Naive thymus-derived CD4-positive, alpha-beta T cell (primary cell): ENCODE measurements at regions of chr16 and their contacts with region 1.

Region 1: GRCh38 chr16:75647492-75648264 is at the starts of genes KARS1 and TERF2IP:
- DNase-seq: peak; percentile 86 to 96 (median 96)
- ATAC-seq: peak; percentile 93
- H3K4me3 ChIP-seq: peak within 1 kb of the TSS; percentile 97
- H3K4me3 Mint-ChIP-seq: peak within 1 kb of the TSS; percentile 90 to 100 (median 99)
- H3K27ac ChIP-seq: peak within 1 kb of the TSS; percentile 97
- H3K27ac Mint-ChIP-seq: peak within 1 kb of the TSS; percentile 96 to 100 (median 99)
- H3K4me1 ChIP-seq: peaks cover 36 to 48% of the 10 kb centered on the region in 2 donors
- H3K4me1 Mint-ChIP-seq: peaks cover 35 to 76% (median 67%) of the 10 kb centered on the region in 7 donors
- H3K27me3 ChIP-seq: no peaks in the 10 kb centered on the region
- H3K27me3 Mint-ChIP-seq: no peaks in the 10 kb centered on the region
- total RNA-seq, gene KARS1: 118 to 216 (median 123) TPM
- total RNA-seq, gene TERF2IP: 70.8 to 90.4 (median 88.7) TPM

Region 2: GRCh38 chr16:73996624-73997339 is 1650.9 kb before region 1 on chr16:
- CTCF ChIA-PET with region 1: no interaction called
- POLR2A ChIA-PET with region 1: no interaction called
- intact Hi-C with region 1: no loop called
- DNase-seq: no peak
- ATAC-seq: no peak
- H3K4me3 ChIP-seq: no peak overlapping the region
- H3K4me3 Mint-ChIP-seq: no peak overlapping the region
- H3K27ac ChIP-seq: no peak overlapping the region
- H3K27ac Mint-ChIP-seq: no peak overlapping the region
- H3K4me1 ChIP-seq: no peaks in the 10 kb centered on the region
- H3K4me1 Mint-ChIP-seq: no peaks in the 10 kb centered on the region
- H3K27me3 ChIP-seq: no peaks in the 10 kb centered on the region
- H3K27me3 Mint-ChIP-seq: no peaks in the 10 kb centered on the region

Region 3: GRCh38 chr16:74372953-74373846 is 1274.5 kb before region 1 on chr16:
- CTCF ChIA-PET with region 1: no interaction called
- POLR2A ChIA-PET with region 1: no interaction called
- intact Hi-C with region 1: loop called (anchors 10 kb)
- DNase-seq: no peak
- ATAC-seq: no peak
- H3K4me3 ChIP-seq: no peak overlapping the region
- H3K4me3 Mint-ChIP-seq: no peak overlapping the region
- H3K27ac ChIP-seq: no peak overlapping the region
- H3K27ac Mint-ChIP-seq: peak overlapping the region in 2 of 9 donors; percentile 18 to 86
- H3K4me1 ChIP-seq: no peaks in the 10 kb centered on the region
- H3K4me1 Mint-ChIP-seq: peaks cover 0 to 4% (median 0%) of the 10 kb centered on the region in 7 donors
- H3K27me3 ChIP-seq: no peaks in the 10 kb centered on the region
- H3K27me3 Mint-ChIP-seq: no peaks in the 10 kb centered on the region

Region 4: GRCh38 chr16:74984535-74985296 is 663.0 kb before region 1 on chr16 and contains the start of gene WDR59:
- CTCF ChIA-PET with region 1: no interaction called
- POLR2A ChIA-PET with region 1: interaction called, 8 read pairs
- intact Hi-C with region 1: loop called (anchors 1 kb)
- DNase-seq: peak; percentile 87 to 99 (median 98)
- ATAC-seq: peak; percentile 100
- H3K4me3 ChIP-seq: peak within 1 kb of the TSS; percentile 98
- H3K4me3 Mint-ChIP-seq: peak within 1 kb of the TSS; percentile 90 to 98 (median 95)
- H3K27ac ChIP-seq: peak within 1 kb of the TSS; percentile 86
- H3K27ac Mint-ChIP-seq: peak within 1 kb of the TSS; percentile 72 to 96 (median 92)
- H3K4me1 ChIP-seq: peaks cover 5 to 6% of the 10 kb centered on the region in 2 donors
- H3K4me1 Mint-ChIP-seq: peaks cover 0 to 27% (median 23%) of the 10 kb centered on the region in 7 donors
- H3K27me3 ChIP-seq: no peaks in the 10 kb centered on the region
- H3K27me3 Mint-ChIP-seq: no peaks in the 10 kb centered on the region
- total RNA-seq, gene WDR59: 82.7 to 130 (median 84.7) TPM

Region 5: GRCh38 chr16:75080205-75081029 is 567.3 kb before region 1 on chr16:
- CTCF ChIA-PET with region 1: no interaction called
- POLR2A ChIA-PET with region 1: no interaction called
- intact Hi-C with region 1: no loop called
- DNase-seq: no peak
- ATAC-seq: no peak
- H3K4me3 ChIP-seq: no peak overlapping the region
- H3K4me3 Mint-ChIP-seq: no peak overlapping the region
- H3K27ac ChIP-seq: no peak overlapping the region
- H3K27ac Mint-ChIP-seq: peak overlapping the region in 1 of 9 donors; percentile 8
- H3K4me1 ChIP-seq: peaks cover 14 to 24% of the 10 kb centered on the region in 2 donors
- H3K4me1 Mint-ChIP-seq: peaks cover 25 to 65% (median 43%) of the 10 kb centered on the region in 7 donors
- H3K27me3 ChIP-seq: no peaks in the 10 kb centered on the region
- H3K27me3 Mint-ChIP-seq: peaks cover 0 to 4% (median 0%) of the 10 kb centered on the region in 5 donors

Region 6: DNA sequence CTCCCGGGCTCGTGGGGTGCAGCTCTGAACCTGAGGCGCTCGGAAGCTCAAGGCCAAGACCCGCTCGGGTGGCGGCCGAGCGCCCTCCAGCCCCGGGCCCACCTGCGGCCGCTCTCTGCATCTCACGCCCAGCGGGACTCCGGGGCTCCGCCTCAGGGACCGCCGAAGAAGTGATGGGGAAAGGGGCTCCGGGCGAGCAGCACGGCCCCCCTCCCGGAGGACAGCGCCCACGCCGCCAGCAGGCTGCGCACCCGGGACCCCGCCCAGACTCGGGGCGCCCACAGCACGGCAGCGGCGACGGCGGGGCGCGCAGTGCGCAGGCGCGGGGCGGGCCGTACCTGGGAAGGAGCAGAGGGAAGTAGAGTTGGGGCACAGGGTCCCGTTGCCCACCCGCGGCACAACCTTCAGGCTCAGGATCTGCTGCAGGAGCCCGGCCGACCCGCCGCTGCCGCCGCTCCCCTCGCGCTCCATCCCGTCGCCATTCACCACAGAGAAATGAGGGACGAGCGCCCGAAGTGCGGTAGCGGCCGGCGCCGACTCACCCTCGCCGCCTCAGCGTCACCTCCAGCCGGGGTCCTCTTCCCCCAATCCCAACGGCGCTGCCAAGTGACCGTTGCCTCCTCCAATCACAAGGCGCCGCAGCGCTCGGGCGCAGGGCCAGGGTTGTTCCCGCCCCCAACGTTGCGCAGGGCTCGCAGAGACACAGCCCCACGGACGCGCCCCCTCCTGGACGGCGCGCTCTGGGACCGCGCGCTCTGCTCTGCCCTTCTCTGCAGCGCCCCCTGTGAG is 183.4 kb before region 1 on chr16 and contains the start of gene TMEM170A:
- CTCF ChIA-PET with region 1: no interaction called
- POLR2A ChIA-PET with region 1: interaction called, 14 read pairs
- intact Hi-C with region 1: loop called (anchors 1 kb)
- DNase-seq: peak; percentile 96 to 99 (median 99)
- ATAC-seq: peak; percentile 95
- H3K4me3 ChIP-seq: peak within 1 kb of the TSS; percentile 93
- H3K4me3 Mint-ChIP-seq: peak within 1 kb of the TSS; percentile 86 to 98 (median 93)
- H3K27ac ChIP-seq: peak within 1 kb of the TSS; percentile 93
- H3K27ac Mint-ChIP-seq: peak within 1 kb of the TSS; percentile 75 to 97 (median 93)
- H3K4me1 ChIP-seq: peaks cover 26 to 31% of the 10 kb centered on the region in 2 donors
- H3K4me1 Mint-ChIP-seq: peaks cover 31 to 49% (median 44%) of the 10 kb centered on the region in 7 donors
- H3K27me3 ChIP-seq: no peaks in the 10 kb centered on the region
- H3K27me3 Mint-ChIP-seq: peaks cover 0 to 5% (median 0%) of the 10 kb centered on the region in 5 donors
- total RNA-seq, gene TMEM170A: 31.0 to 50.9 (median 46.6) TPM

Region 7: DNA sequence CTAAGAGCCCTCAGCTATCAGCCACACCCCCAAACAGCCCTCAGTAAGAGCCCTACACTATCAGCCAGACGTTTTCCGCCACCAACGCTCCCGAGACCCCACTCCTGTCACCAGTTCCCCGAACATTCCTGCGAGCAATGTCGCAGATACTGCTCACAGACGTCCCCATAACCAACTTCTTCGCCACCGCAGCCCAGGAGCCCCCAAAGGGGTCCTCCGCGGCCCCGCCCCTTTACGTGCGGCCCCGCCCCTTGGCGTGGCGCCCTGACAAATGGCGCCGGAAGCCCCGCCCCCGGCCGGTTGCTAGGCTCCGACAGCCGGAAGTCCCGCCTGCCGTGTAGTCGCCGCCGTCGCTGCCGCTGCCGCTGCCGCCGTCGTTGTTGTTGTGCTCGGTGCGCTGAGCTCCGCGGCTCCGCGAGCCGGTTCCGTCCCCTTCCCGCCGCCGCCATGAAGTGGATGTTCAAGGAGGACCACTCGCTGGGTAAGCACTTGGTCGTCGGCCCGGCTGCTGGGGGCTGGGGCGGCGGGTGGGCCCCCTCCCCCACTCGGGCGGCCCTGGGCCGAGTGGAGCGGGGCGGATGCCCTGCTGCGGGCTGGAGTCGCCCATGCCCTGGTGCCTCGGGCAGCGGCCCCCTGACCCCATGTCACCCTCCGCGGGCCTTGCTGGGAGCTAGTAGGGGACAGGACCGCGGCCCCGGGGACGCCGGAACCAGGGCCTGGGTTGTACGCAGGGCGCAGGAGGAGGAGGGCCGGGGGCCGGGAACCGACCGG is 81.5 kb before region 1 on chr16 and contains the start of gene GABARAPL2:
- CTCF ChIA-PET with region 1: interaction called, 3 read pairs
- POLR2A ChIA-PET with region 1: interaction called, 45 read pairs
- intact Hi-C with region 1: loop called (anchors 1 kb)
- DNase-seq: peak; percentile 87 to 97 (median 92)
- ATAC-seq: peak; percentile 90
- H3K4me3 ChIP-seq: peak within 1 kb of the TSS; percentile 93
- H3K4me3 Mint-ChIP-seq: peak within 1 kb of the TSS; percentile 88 to 100 (median 96)
- H3K27ac ChIP-seq: peak within 1 kb of the TSS; percentile 90
- H3K27ac Mint-ChIP-seq: peak within 1 kb of the TSS; percentile 79 to 100 (median 92)
- H3K4me1 ChIP-seq: peaks cover 20 to 27% of the 10 kb centered on the region in 2 donors
- H3K4me1 Mint-ChIP-seq: peaks cover 25 to 50% (median 47%) of the 10 kb centered on the region in 7 donors
- H3K27me3 ChIP-seq: no peaks in the 10 kb centered on the region
- H3K27me3 Mint-ChIP-seq: peaks cover 8 to 16% (median 13%) of the 10 kb centered on the region in 5 donors
- total RNA-seq, gene GABARAPL2: 57.9 to 81.2 (median 75.6) TPM

Region 8: GRCh38 chr16:75660726-75661302 is 13.1 kb after region 1 on chr16:
- CTCF ChIA-PET with region 1: interaction called, 4 read pairs
- POLR2A ChIA-PET with region 1: interaction called, 15 read pairs
- intact Hi-C with region 1: no loop called
- DNase-seq: no peak
- ATAC-seq: no peak
- H3K4me3 ChIP-seq: no peak overlapping the region
- H3K4me3 Mint-ChIP-seq: no peak overlapping the region
- H3K27ac ChIP-seq: peak overlapping the region; percentile 7
- H3K27ac Mint-ChIP-seq: peak overlapping the region in 5 of 9 donors; percentile 10 to 51 (median 37)
- H3K4me1 ChIP-seq: no peaks in the 10 kb centered on the region
- H3K4me1 Mint-ChIP-seq: peaks cover 5 to 20% (median 8%) of the 10 kb centered on the region in 7 donors
- H3K27me3 ChIP-seq: no peaks in the 10 kb centered on the region
- H3K27me3 Mint-ChIP-seq: no peaks in the 10 kb centered on the region

Region 9: GRCh38 chr16:75860326-75861053 is 212.8 kb after region 1 on chr16:
- CTCF ChIA-PET with region 1: no interaction called
- POLR2A ChIA-PET with region 1: no interaction called
- intact Hi-C with region 1: no loop called
- DNase-seq: no peak
- ATAC-seq: no peak
- H3K4me3 ChIP-seq: no peak overlapping the region
- H3K4me3 Mint-ChIP-seq: no peak overlapping the region
- H3K27ac ChIP-seq: no peak overlapping the region
- H3K27ac Mint-ChIP-seq: no peak overlapping the region
- H3K4me1 ChIP-seq: no peaks in the 10 kb centered on the region
- H3K4me1 Mint-ChIP-seq: no peaks in the 10 kb centered on the region
- H3K27me3 ChIP-seq: no peaks in the 10 kb centered on the region
- H3K27me3 Mint-ChIP-seq: peaks cover 0 to 9% (median 4%) of the 10 kb centered on the region in 5 donors